Activated naive CD4-positive, alpha-beta T cell treated with anti-CD3 and anti-CD28 coated beads for 36 hours (primary cell): ENCODE measurements at regions of chr3 and their contacts with region 1.

Region 1: DNA sequence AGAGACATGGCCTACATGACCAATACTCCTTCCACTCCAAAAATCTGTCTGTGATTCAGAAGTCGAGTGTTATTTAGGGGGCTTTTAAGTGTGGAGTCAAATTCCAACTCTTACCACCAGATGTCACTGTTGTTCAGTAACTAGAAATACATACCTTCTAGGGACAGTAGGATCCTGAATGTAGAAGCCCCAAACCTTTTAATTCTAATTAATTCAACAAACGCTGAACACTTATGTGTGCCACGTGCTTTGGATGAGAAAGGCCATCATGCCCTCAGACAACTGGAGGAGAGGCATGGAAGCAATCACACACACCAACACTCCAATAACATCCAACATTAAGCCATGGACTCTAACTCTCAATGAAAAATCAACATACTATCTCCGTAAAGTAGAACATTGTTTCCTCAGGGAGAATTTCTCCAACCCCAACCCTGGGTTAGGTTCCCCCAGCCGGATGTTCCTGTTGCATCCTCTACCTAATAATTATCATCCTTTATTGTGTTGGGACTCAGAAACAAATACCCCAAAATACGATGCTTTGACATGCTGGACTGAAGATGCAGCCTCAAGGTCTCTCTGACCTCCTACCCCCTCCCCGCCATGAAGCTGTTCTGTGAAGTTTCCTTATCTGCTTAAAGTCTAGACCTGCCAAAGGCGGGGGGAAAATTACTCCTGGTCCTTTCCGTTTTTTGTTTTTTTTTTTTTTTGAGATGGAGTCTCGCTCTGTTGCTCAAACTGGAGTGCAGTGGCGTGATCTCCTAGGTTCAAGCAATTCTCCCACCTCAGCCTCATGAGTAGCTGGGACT is 8.0 kb upstream of the CCDC13 start:
- DNase-seq: peak; percentile 22
- H3K4me3 Mint-ChIP-seq: no peak overlapping the region
- H3K27ac Mint-ChIP-seq: no peak overlapping the region
- H3K4me1 Mint-ChIP-seq: no peaks in the 10 kb centered on the region
- H3K27me3 Mint-ChIP-seq: no peaks in the 10 kb centered on the region

Region 2: GRCh38 chr3:42685891-42686820 is 94.9 kb before region 1 on chr3:
- CTCF ChIA-PET with region 1: no interaction called
- intact Hi-C with region 1: no loop called
- DNase-seq: no peak
- H3K4me3 Mint-ChIP-seq: no peak overlapping the region
- H3K27ac Mint-ChIP-seq: no peak overlapping the region
- H3K4me1 Mint-ChIP-seq: peaks cover 2% of the 10 kb centered on the region
- H3K27me3 Mint-ChIP-seq: peaks cover 27% of the 10 kb centered on the region

Region 3: DNA sequence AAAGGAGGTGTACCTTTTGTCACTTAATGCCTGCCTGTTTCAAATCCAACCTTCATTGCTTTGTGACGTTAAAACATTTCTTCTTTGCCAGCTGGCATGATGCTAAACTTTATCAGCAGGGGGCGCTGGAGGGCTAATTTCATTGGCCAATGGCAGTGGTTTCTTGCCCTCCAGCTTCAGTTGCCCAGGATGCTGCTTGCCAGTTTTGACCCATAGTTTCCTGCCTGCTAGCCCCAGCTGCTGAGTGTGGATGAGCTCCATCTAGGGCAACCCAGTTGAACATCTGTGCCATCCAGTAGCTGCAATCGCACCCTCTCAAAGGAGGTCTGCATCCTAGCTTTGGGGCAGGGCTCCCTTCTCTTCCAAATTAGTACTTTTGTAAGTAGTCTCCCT is 50.2 kb after region 1 on chr3:
- CTCF ChIA-PET with region 1: interaction called, 10 read pairs
- intact Hi-C with region 1: loop called (anchors 1 kb)
- DNase-seq: peak; percentile 92
- H3K4me3 Mint-ChIP-seq: no peak overlapping the region
- H3K27ac Mint-ChIP-seq: no peak overlapping the region
- H3K4me1 Mint-ChIP-seq: no peaks in the 10 kb centered on the region
- H3K27me3 Mint-ChIP-seq: no peaks in the 10 kb centered on the region

Region 4: DNA sequence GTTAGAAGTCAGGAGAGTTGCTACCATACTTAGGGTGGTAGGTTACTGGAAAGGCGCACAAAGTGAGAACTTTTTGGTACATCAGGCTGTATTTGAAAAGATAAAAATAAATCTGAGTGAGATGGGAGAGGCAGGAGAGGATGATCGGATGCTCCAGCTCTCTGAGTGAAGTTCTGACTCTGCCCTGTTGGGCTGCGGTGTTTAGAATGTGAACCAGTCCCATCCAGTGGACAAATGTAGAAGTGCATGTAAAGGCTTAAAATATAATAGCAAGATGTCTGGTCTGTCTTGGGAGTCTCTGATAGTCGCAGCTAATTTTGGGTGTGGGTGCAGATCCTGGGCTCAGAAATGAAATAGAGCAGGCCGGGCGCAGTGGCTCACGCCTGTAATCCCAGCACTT is 58.5 kb after region 1 on chr3:
- CTCF ChIA-PET with region 1: interaction called, 10 read pairs
- intact Hi-C with region 1: loop called (anchors 1 kb)
- DNase-seq: peak; percentile 49
- H3K4me3 Mint-ChIP-seq: no peak overlapping the region
- H3K27ac Mint-ChIP-seq: no peak overlapping the region
- H3K4me1 Mint-ChIP-seq: no peaks in the 10 kb centered on the region
- H3K27me3 Mint-ChIP-seq: no peaks in the 10 kb centered on the region

Region 5: DNA sequence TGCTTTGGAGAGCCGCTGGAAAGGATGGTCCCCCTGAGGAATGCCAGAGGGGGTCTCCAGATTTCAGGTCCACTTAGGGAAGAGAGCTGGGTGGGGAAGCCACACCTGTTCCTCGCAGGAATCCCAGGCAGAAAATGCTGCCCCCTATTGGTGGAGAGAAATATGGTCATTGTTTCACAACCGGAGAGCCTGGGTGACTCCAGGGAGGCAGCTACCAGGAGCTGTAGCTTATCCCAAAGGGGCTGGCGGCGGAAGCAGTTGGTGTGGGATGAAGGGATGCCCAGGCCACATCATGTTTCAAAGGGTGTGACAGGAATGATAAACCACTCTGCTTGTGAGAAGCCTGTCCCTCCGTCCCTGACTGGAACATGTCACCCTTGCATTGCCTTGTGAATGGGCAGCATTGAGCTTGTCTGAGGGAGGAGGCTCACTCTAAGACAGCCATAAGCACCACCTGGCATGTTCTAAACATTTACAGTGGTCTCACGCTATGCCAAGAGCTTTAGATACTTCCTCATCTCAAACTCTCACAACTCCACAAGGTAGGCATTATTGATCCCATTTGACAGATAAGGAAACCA is 290.3 kb after region 1 on chr3:
- CTCF ChIA-PET with region 1: no interaction called
- intact Hi-C with region 1: loop called (anchors 5 kb)
- DNase-seq: peak; percentile 45
- H3K4me3 Mint-ChIP-seq: no peak overlapping the region
- H3K27ac Mint-ChIP-seq: no peak overlapping the region
- H3K4me1 Mint-ChIP-seq: no peaks in the 10 kb centered on the region
- H3K27me3 Mint-ChIP-seq: no peaks in the 10 kb centered on the region